Left cardiac atrium (tissue), 4 donors: ENCODE measurements at regions of chr21 and their contacts with region 1.

Region 1: DNA sequence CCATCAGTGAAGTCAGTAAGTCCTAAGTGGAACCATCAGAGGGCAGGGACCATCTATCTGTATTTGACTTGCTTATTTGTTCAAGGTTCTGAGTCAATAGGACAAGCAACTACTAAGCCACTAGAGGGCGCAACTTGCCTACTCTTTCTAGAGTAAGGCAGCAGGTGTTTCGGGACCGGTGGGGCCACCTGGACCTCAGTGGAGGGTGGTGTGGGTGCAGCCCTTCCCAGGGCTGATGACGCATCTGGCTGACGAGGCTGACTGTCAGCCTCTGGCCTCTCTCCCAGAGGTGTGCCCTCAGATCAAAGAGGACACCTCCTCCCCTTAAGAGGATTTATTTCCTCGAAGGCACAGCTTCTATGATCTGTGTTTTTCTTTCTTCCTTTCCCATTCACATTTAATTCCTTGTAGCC is 6.6 kb downstream of the CBR3 start:
- DNase-seq: peak; percentile 79
- ATAC-seq: peak; percentile 87 to 94

Region 2: DNA sequence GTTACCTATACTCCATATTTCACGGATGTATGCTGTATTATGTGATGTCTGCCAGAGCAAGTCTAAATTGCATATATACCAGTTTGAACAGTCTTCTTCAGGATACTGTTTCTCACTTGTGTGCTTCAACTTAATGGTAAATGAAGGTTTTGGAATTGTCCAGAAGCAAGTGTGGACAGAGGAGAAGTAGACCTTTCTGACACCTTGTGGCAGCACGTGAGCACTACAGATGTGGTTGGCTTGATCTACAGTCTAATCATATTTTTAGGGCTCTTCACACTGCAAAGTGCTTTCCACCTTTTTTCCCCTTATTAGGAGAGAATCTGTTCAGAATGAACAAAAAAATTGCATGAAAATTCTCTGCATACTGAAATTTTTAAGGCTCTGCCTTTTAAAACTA is 189.4 kb after region 1 on chr21:
- intact Hi-C with region 1: loop called (anchors 5 to 10 kb)
- DNase-seq: peak; percentile 44
- ATAC-seq: peak; percentile 71 to 88